Mammary epithelial cell (primary cell): ENCODE measurements at regions of chr12 and their contacts with region 1.

Region 1: DNA sequence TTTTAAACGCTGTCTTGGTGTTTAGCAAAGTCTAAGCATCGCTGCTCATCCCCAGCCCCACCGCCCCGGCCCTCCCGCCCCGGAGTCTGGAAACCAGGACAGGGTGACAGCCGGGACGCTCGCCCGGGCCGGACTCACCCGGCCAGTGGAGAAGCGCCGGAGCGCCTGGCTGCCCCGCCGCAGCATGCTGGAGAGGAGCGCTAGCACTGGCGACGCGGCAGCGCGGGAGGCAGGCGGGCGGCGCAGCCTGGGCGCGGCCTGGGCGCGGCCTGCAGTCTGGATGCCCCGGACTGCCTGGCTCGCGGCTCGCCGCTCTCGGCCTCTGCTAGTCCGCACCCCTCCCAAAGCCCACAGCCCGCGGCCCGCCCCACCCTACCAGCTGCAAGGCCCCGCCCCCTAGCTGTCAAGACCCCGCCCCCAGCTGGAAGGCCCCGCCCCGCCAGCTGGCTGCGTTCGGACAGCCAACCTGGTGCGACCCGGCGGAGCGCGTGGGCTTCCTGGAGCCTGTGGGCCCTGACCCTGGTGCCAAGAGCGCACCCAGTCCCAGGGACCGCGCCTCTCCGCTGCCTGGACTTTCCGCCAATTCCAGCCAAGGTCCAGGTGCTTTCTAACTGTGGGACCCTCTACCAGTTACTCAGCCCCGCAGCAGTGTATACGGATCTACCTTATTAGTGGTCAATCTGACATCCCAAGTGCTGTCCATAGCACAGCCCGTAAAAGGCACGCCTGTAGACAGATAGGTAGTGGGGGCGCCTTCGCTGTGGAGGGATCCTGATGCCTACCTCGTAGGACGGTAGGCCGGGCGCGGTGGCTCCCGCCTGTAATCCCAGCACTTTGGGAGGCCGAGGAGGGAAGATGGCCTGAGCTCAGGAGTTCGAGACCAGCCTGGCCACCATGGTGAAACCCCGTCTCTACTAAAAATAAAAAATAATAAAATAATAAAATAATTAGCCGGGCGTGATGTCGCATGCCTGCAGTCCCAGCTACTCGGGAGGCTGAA is at the start of gene ALDH1L2:
- DNase-seq: peak; percentile 81
- H3K4me3 ChIP-seq: peak within 1 kb of the TSS; percentile 68 to 84 (median 74)
- H3K27ac ChIP-seq: peak within 1 kb of the TSS; percentile 66
- H3K4me1 ChIP-seq: peaks cover 12% of the 10 kb centered on the region
- H3K27me3 ChIP-seq: no peaks in the 10 kb centered on the region
- CTCF ChIP-seq: no peak
- total RNA-seq, gene ALDH1L2: 61.7 to 92.1 TPM

Region 2: GRCh38 chr12:105100998-105101397 is 16.4 kb after region 1 on chr12:
- CTCF ChIA-PET with region 1: interaction called, 3 read pairs
- dilution Hi-C with region 1: no loop called
- in situ Hi-C with region 1: no loop called
- intact Hi-C with region 1: loop called (anchors 2 kb)
- DNase-seq: no peak
- H3K4me3 ChIP-seq: no peak overlapping the region
- H3K27ac ChIP-seq: no peak overlapping the region
- H3K4me1 ChIP-seq: peaks cover 5% of the 10 kb centered on the region
- H3K27me3 ChIP-seq: no peaks in the 10 kb centered on the region
- CTCF ChIP-seq: no peak

Region 3: GRCh38 chr12:105164068-105164467 is 79.5 kb after region 1 on chr12:
- CTCF ChIA-PET with region 1: no interaction called
- dilution Hi-C with region 1: no loop called
- in situ Hi-C with region 1: no loop called
- intact Hi-C with region 1: loop called (anchors 2 kb)
- DNase-seq: peak; percentile 3
- H3K4me3 ChIP-seq: no peak overlapping the region
- H3K27ac ChIP-seq: no peak overlapping the region
- H3K4me1 ChIP-seq: no peaks in the 10 kb centered on the region
- H3K27me3 ChIP-seq: no peaks in the 10 kb centered on the region
- CTCF ChIP-seq: no peak